ENCODE measurements at regions of chr9 and their contacts with region 1.

Region 1: DNA sequence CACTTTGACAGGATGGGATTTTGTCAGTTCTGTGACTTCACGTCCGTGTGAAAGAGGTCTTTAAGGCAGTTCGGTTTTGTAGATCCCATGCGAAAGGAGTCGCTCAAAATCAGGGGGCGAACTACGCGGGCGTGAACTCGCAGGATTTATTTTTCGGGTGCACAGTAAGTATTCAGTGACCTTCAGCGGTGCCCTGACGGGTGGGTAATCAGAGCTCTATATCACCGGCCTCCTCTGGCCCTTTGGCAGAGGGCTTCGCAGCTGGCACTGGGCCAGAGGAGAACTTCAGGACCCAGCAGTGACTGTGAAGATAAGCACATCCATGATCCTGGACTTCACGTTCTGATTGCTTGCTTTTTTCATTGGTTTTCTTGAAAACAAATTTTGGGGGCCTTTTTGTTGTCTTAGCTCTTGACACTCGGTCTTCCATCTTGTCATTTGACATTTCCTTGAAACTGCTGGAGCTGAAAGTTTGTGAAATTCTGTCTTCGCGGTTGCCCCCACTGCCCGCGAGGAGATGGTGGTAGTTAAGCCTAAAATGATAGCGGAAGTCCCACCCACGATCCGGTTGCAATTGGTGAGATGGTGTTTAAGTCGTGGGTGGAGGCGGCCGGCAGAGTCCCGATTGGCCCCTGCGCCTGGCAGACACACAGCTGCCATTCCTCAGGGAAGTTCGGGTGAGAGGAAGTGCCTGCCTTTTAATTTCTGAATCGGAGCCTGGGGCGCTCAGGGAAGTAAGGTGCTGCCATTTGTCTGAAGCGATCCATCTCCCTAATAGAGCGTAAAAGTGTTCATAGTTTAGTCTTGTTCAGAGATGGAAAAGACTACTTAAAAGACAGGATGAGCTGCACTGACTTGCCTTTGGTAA is at the start of gene FAM120AOS:
- DNase-seq: peak; percentile 92
- H3K4me3 Mint-ChIP-seq: peak within 1 kb of the TSS; percentile 87
- H3K27ac Mint-ChIP-seq: peak within 1 kb of the TSS; percentile 84
- H3K4me1 Mint-ChIP-seq: peaks cover 45% of the 10 kb centered on the region
- H3K27me3 Mint-ChIP-seq: no peaks in the 10 kb centered on the region
- total RNA-seq, gene FAM120AOS: 25.5 to 26.0 TPM

Region 2: DNA sequence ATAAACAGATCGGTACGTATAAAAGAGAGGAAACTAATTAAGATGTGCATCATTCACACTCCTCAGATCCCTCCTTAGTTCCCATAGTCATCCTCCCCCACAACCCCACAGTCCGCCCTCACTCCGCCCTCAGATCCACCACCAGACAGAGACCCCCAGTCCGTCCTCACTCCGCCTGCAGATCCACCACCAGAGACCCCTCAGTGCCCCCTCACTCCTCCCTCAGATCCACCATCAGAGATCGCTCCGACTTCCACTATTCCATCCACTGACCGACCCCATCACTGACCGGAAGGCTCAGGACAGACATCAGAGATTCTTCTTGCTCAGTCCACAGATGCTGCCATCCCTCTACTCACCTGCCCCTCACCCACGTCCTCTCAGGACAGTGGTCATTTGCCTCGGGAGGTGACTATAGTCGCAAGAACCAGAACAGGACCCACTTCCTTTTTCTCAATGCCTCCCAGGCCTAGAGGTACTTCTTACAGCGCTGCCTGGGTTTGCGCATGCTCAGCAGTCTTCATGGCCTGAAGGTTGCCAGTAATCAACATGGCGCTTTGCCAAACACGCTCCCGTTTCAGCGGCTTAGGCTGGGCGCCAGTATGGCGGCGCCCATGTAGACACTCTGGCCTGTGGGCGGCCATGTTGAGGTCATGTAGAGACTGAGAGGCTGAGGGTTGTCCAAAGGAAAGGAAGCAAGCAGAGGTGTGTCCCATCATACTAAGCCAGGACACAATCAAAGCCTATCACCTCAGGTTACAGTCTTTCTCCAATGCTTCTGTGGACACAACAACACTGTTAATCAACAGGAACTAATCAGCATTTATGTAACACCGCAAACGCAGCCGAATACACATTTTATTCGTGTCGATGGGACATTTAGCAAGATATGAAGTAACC is 575.5 kb before region 1 on chr9 and contains the start of gene ZNF484:
- CTCF ChIA-PET with region 1: no interaction called
- intact Hi-C with region 1: loop called (anchors 5 kb)
- DNase-seq: peak; percentile 99
- H3K4me3 Mint-ChIP-seq: peak within 1 kb of the TSS; percentile 87
- H3K27ac Mint-ChIP-seq: peak within 1 kb of the TSS; percentile 94
- H3K4me1 Mint-ChIP-seq: peaks cover 40% of the 10 kb centered on the region
- H3K27me3 Mint-ChIP-seq: no peaks in the 10 kb centered on the region
- total RNA-seq, gene ZNF484: 5.8 to 6.5 TPM

Region 3: DNA sequence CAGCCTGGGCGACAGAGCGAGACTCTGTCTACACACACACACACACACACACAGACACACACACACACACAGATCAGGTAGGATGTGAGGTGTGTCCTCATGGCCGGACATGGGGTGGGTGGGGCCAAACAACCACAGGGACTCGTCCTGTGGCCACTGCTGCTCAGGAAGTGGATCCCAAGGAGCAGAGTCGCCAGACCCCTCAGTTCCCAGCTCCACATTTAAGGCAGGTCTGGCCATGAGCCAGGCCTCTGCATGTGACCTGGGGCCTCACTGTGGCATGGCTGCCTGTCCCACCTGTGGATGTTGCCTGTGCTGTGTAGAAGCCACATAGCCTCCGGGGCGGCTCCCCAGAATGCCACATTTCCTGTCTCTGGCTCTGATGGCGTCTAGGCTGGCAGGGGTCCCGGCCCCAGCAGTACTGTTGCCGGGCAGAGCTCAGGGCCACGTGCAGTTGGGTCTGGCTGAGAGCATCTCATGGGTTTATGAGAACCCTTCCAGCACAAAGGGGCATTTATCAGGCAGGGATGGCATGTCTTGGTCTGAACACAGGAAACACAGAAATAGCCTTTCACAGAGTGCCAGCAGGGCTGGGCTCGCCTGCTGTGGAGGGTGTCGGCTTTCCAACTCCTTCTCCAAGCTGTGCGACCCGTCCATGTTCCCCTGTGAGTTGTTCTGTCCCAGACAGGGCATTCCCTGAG is 309.3 kb before region 1 on chr9:
- CTCF ChIA-PET with region 1: no interaction called
- intact Hi-C with region 1: loop called (anchors 1 kb)
- DNase-seq: peak; percentile 67
- H3K4me3 Mint-ChIP-seq: no peak overlapping the region
- H3K27ac Mint-ChIP-seq: peak overlapping the region; percentile 79
- H3K4me1 Mint-ChIP-seq: peaks cover 68% of the 10 kb centered on the region
- H3K27me3 Mint-ChIP-seq: no peaks in the 10 kb centered on the region

Region 4: GRCh38 chr9:93415176-93415690 is 38.0 kb before region 1 on chr9:
- CTCF ChIA-PET with region 1: no interaction called
- intact Hi-C with region 1: no loop called
- DNase-seq: no peak
- H3K4me3 Mint-ChIP-seq: no peak overlapping the region
- H3K27ac Mint-ChIP-seq: no peak overlapping the region
- H3K4me1 Mint-ChIP-seq: peaks cover 8% of the 10 kb centered on the region
- H3K27me3 Mint-ChIP-seq: peaks cover 14% of the 10 kb centered on the region

Region 5: DNA sequence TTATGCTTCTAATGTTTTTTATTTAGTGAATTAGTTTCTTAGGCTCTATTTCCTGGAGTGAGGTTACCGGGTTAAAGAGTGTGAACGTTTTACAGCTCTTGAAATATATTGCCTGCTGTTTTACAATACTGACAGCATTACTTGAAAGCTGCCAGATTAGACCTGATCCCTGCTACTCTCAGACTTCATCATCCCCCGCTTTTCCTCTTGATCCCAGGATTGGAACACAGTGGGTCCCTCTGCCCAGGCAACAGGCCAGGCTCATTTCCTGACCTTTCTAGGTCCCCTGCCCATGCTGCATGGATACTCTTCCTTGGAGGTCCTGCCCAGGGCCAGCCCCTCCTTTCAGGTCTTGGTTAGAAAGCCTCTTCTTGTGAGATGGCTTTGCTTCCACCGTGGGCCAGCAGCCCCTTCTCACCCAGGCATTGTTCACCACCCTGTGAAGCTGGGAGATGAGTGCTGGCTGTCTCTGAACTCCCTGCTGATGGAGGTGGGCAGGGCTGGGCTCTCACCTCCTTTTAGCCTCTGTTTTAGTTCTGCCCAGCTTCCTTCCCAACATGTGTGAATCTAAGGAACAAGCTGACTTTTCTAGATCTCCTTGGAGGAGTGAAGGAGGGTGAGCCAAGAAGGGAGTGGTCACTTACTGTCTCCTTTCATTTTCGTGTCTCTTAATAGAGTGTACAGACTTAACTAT is 15.6 kb after region 1 on chr9:
- CTCF ChIA-PET with region 1: interaction called, 12 read pairs
- intact Hi-C with region 1: no loop called
- DNase-seq: no peak
- H3K4me3 Mint-ChIP-seq: no peak overlapping the region
- H3K27ac Mint-ChIP-seq: no peak overlapping the region
- H3K4me1 Mint-ChIP-seq: peaks cover 61% of the 10 kb centered on the region
- H3K27me3 Mint-ChIP-seq: no peaks in the 10 kb centered on the region

Region 6: GRCh38 chr9:93509084-93509483 is 55.8 kb after region 1 on chr9:
- CTCF ChIA-PET with region 1: no interaction called
- intact Hi-C with region 1: no loop called
- DNase-seq: no peak
- H3K4me3 Mint-ChIP-seq: no peak overlapping the region
- H3K27ac Mint-ChIP-seq: no peak overlapping the region
- H3K4me1 Mint-ChIP-seq: peaks cover 45% of the 10 kb centered on the region
- H3K27me3 Mint-ChIP-seq: no peaks in the 10 kb centered on the region

Region 7: DNA sequence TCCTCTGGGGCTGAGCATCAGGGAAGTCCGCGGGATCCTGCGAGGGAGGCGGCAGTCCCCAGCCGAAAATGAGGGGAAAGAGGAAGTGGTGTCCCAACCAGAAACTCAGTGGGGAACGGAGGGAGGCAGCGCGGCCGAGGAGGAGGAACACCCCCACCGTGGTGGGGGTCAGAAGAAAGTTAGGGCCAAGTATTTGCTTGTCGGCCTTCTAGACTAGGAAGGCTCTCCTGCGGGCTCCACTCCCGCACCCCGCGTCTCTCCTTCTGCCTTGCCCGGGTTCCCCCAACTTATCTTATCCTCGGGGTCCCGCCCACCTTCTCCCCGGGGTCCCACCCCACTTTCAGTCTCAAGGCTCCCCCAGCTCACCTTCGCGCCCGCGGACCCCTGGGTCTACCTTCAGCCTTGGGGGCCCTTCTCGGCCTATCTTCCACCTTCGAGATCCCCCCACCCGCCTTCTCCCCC is 122.5 kb after region 1 on chr9:
- CTCF ChIA-PET with region 1: no interaction called
- intact Hi-C with region 1: loop called (anchors 2 kb)
- DNase-seq: peak; percentile 52
- H3K4me3 Mint-ChIP-seq: peak overlapping the region; percentile 86
- H3K27ac Mint-ChIP-seq: peak overlapping the region; percentile 87
- H3K4me1 Mint-ChIP-seq: peaks cover 30% of the 10 kb centered on the region
- H3K27me3 Mint-ChIP-seq: no peaks in the 10 kb centered on the region

Region 8: GRCh38 chr9:94166237-94166963 is 713.1 kb after region 1 on chr9:
- CTCF ChIA-PET with region 1: no interaction called
- intact Hi-C with region 1: loop called (anchors 2 kb)
- DNase-seq: peak; percentile 97
- H3K4me3 Mint-ChIP-seq: peak overlapping the region; percentile 86
- H3K27ac Mint-ChIP-seq: peak overlapping the region; percentile 87
- H3K4me1 Mint-ChIP-seq: peaks cover 41% of the 10 kb centered on the region
- H3K27me3 Mint-ChIP-seq: no peaks in the 10 kb centered on the region